Body of pancreas (tissue), 4 donors: ENCODE measurements at regions of chr16 and their contacts with region 1.

Region 1: GRCh38 chr16:82509691-82510430 is 116.9 kb upstream of the CDH13 start:
- DNase-seq: no peak
- ATAC-seq: no peak
- H3K4me3 ChIP-seq: no peak overlapping the region
- H3K27ac ChIP-seq: no peak overlapping the region
- H3K4me1 ChIP-seq: no peaks in the 10 kb centered on the region
- H3K27me3 ChIP-seq: no peaks in the 10 kb centered on the region
- CTCF ChIP-seq: no peak
- POLR2A ChIP-seq: no peak

Region 2: GRCh38 chr16:82456683-82457082 is 53.2 kb before region 1 on chr16:
- intact Hi-C with region 1: loop called (anchors 10 kb)
- DNase-seq: peak; percentile 54 to 69 (median 58)
- ATAC-seq: peak; percentile 74
- H3K4me3 ChIP-seq: no peak overlapping the region
- H3K27ac ChIP-seq: no peak overlapping the region
- H3K4me1 ChIP-seq: no peaks in the 10 kb centered on the region
- H3K27me3 ChIP-seq: no peaks in the 10 kb centered on the region
- CTCF ChIP-seq: peak; percentile 29 to 77 (median 66)
- POLR2A ChIP-seq: no peak